Dendritic cell treated with granulocyte-macrophage colony-stimulating factor and Interleukin-4, amounts not matched to agents 40 ng/mL and 50 ng/mL, for 4 days (primary cell): ENCODE measurements at regions of chr17 and their contacts with region 1.

Region 1: DNA sequence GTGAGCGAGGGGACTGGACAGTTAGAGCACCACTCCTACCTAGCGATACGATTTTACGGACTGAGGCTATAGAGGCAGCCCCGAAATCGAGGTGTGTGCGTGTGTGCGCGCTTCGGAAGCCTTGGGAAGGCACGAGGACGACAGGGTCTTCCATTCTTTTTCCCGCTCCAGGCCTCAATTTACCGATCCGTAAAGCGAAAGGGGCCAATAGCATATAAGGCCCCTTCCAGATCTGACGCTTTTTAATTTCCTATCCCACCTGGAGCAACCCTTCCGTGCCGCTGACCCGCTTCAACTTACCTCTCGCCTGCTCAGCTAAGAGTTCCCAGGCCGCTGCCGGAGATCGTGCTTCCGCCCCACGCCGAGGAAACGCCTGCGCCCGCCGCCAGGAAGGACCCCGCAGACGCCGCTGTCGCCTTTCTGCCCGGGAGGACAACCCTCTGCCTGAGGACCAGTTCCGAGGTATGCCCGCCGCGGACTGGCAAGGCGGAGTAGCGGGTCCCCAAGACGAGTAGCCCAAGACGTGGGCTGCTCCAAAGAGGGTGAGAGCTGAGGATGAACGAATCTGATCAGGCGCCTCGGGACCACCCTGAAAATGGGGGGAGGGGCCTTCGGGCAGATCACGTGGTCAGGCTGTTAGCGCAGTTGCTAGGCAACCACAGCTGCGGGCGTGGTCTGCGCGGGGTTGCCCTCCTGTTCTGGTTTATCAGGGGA is at the start of gene EFTUD2:
- H3K4me3 Mint-ChIP-seq: peak within 1 kb of the TSS; percentile 86
- H3K27ac Mint-ChIP-seq: peak within 1 kb of the TSS; percentile 97
- H3K4me1 Mint-ChIP-seq: peaks cover 51% of the 10 kb centered on the region
- H3K27me3 Mint-ChIP-seq: no peaks in the 10 kb centered on the region

Region 2: GRCh38 chr17:44919885-44920564 is 20.8 kb after region 1 on chr17:
- intact Hi-C with region 1: no loop called
- H3K4me3 Mint-ChIP-seq: no peak overlapping the region
- H3K27ac Mint-ChIP-seq: no peak overlapping the region
- H3K4me1 Mint-ChIP-seq: peaks cover 18% of the 10 kb centered on the region
- H3K27me3 Mint-ChIP-seq: peaks cover 29% of the 10 kb centered on the region

Region 3: DNA sequence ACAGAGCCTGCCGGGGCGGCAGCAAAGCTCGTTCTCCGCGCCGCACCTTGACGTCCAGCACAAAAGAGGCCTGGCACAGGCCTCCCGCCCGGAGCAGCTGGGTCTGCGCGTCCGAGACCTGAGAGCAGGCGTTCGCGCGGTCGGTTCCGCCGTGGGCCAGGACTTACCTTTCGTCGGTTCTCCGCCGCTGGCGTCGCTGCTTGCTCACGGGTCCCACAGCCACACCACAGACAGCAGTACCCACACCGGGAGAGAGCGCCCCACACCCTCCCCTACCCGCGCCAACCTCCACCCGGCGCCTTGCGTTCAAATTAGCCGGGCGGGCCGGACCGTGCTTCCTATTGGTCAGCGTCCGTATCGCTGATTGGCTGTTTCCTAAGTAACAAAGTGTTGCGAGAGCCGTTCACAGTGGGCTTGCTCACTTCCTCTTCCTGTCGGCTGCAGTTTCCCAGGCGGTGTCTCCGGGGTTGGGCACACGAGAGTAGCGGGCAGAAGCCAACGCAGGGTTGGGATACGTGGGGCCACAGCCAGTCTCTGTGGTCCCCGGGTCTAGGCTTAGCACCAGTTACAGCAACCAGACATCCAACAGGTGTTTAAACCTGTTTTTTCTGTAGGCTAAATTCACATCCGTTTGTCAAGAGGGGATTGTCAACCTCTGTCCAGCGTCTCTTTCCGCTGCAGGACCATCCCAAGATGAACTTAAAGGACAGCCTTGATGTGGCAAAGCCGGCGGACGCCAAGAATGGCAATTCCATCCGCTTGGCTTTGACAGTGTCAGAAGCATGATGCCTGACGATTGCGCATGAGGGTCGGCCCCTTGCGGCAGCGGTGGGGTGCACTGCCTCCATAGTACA is 48.5 kb after region 1 on chr17 and contains the start of gene KIF18B:
- intact Hi-C with region 1: loop called (anchors 1 kb)
- H3K4me3 Mint-ChIP-seq: peak within 1 kb of the TSS; percentile 81
- H3K27ac Mint-ChIP-seq: peak within 1 kb of the TSS; percentile 82
- H3K4me1 Mint-ChIP-seq: peaks cover 5% of the 10 kb centered on the region
- H3K27me3 Mint-ChIP-seq: peaks cover under 1% of the 10 kb centered on the region